Activated CD4-positive, alpha-beta memory T cell treated with anti-CD3 and anti-CD28 coated beads, Interleukin-2, amount 10 ng/mL, durations not matched to agents 7 days and 5 days (primary cell): ENCODE measurements at regions of chr12 and their contacts with region 1.

Region 1: GRCh38 chr12:121494093-121494787 is 86.6 kb downstream of the KDM2B start:
- DNase-seq: peak; percentile 66
- H3K4me3 Mint-ChIP-seq: no peak overlapping the region
- H3K27ac Mint-ChIP-seq: no peak overlapping the region
- H3K4me1 Mint-ChIP-seq: peaks cover 12% of the 10 kb centered on the region
- H3K27me3 Mint-ChIP-seq: no peaks in the 10 kb centered on the region

Region 2: GRCh38 chr12:121483949-121484348 is 10.3 kb before region 1 on chr12:
- CTCF ChIA-PET with region 1: interaction called, 14 read pairs
- POLR2A ChIA-PET with region 1: no interaction called
- DNase-seq: no peak
- H3K4me3 Mint-ChIP-seq: no peak overlapping the region
- H3K27ac Mint-ChIP-seq: no peak overlapping the region
- H3K4me1 Mint-ChIP-seq: no peaks in the 10 kb centered on the region
- H3K27me3 Mint-ChIP-seq: no peaks in the 10 kb centered on the region

Region 3: DNA sequence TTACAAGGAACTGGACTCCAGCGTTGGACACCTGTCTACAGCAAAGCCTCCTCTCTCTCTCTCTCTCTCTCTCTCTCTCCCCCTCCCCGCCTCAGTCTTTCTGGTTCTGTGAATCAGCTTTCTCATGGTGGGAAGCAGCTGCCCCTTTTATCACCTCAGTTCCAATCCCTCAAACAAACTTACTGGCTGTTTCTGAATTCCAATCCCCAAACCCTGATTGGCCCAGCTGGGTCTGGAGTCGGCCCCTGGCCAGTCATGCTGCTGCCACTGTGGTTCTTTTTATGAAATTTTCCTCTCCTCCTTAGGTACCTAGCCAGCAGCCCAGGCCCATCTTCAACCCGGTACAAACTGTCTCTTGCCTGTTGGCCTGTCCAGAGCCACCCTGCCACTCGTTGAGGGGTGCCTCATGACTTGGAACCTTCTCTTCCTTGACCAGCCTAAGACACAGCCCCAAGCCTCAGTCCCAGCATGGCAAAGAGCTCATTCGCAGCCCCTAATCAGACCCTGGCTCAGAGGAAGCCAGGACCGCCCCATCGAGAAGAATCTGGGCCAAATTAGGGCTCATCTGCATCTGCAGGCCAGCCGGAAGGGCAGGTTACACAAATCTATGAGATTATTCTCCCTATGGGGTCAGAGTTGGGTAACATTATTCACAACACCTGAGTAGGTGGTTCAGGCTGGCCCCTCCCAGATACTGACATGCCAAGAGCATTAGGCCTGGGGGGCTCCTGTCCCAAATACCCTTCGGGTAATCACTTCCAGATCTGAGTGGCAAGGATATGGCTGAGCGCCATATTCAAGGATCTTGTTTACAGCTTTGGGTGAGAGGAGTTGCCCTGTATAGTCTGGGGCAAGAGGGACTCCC is 184.7 kb after region 1 on chr12:
- CTCF ChIA-PET with region 1: interaction called, 10 read pairs
- POLR2A ChIA-PET with region 1: no interaction called
- DNase-seq: no peak
- H3K4me3 Mint-ChIP-seq: no peak overlapping the region
- H3K27ac Mint-ChIP-seq: no peak overlapping the region
- H3K4me1 Mint-ChIP-seq: peaks cover 11% of the 10 kb centered on the region
- H3K27me3 Mint-ChIP-seq: no peaks in the 10 kb centered on the region

Region 4: DNA sequence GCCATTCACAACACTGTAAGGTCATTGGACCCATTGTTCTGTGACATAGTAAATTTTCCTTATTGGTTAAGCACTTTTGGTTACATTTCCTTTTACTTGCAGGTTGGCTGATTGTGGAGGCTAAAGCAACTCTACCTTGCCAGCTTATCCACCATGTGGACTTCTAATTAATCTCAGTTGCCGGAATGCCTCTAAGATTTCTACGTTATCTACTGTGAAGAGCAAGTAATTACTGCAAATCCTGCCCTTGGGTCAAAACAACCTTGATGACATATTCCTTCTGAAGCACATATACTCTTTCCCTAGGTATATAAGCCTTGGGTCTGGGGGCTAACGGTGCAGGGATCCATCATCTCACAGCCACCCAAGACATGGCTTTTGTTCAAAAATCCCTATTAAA is 194.7 kb after region 1 on chr12:
- CTCF ChIA-PET with region 1: interaction called, 13 read pairs
- POLR2A ChIA-PET with region 1: no interaction called
- DNase-seq: no peak
- H3K4me3 Mint-ChIP-seq: no peak overlapping the region
- H3K27ac Mint-ChIP-seq: no peak overlapping the region
- H3K4me1 Mint-ChIP-seq: peaks cover 15% of the 10 kb centered on the region
- H3K27me3 Mint-ChIP-seq: peaks cover 2% of the 10 kb centered on the region